CD4-positive, alpha-beta memory T cell (primary cell): ENCODE measurements at regions of chr1 and their contacts with region 1.

Region 1: DNA sequence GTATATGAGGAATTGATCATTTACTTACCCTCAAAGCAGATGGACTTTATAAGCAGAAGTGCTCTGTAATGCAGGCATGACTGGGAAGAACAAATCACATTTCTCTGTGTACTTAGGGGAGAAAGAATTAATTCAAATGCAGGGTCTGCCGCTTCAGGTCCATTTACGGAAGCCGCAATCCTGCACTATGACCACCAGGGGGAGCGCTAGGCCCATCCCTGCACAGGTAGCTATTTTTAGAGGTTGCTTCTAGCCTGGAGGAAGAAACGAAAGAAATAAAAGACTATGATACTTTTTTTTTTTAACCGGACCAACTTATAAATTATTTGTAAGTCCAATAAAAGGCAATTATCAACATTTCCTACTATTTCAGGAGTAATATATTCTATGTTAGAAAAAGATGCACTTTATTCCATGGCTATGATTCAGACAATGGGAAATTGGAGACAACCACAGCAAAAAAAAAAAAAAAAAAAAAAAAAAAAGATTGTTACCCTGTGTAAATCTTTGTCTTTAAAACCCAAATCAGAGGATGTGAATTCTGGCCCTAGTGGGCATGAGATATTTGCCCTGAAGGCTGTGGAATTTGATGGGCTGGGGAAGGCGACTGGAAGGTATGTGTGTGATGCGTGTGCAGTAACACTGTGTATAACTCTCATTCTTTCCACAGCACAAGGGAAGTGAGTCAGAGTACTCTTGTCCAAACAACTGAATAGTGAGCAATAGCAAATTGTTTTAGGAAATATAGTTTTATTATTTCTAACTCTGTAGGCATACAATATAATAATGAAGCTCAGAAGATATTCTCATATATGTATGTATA is 12.9 kb upstream of the FYB2 start:
- DNase-seq: peak; percentile 55 to 60 (median 60)
- H3K4me3 ChIP-seq: no peak overlapping the region
- H3K4me3 Mint-ChIP-seq: peak overlapping the region in 1 of 8 donors; percentile 65
- H3K27ac ChIP-seq: no peak overlapping the region
- H3K27ac Mint-ChIP-seq: no peak overlapping the region
- H3K4me1 ChIP-seq: no peaks in the 10 kb centered on the region
- H3K4me1 Mint-ChIP-seq: peaks cover 0 to 5% (median 1%) of the 10 kb centered on the region in 4 donors
- H3K27me3 ChIP-seq: no peaks in the 10 kb centered on the region
- H3K27me3 Mint-ChIP-seq: peaks cover 7 to 20% of the 10 kb centered on the region in 2 donors

Region 2: DNA sequence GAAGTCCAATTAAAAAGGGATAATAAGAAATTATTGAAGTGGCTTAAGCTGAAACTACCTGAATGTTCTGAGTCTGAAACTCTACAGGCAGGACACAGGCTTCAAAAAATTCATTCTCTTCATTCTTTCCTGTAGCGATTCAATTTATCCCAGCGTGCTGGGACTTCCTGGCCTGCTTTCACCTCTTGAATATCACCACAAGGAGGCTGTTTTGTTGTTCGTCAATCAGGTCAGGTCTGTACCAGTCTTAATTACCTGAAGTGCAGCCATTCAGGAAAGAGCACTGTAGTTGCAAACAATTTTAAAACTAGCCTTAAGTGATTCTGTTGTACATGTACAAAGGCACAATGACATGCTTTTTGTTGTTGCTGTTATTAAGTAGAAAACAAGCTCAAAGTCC is 51.3 kb before region 1 on chr1:
- CTCF ChIA-PET with region 1: no interaction called
- POLR2A ChIA-PET with region 1: no interaction called
- intact Hi-C with region 1: no loop called
- DNase-seq: no peak
- H3K4me3 ChIP-seq: no peak overlapping the region
- H3K4me3 Mint-ChIP-seq: no peak overlapping the region
- H3K27ac ChIP-seq: no peak overlapping the region
- H3K27ac Mint-ChIP-seq: no peak overlapping the region
- H3K4me1 ChIP-seq: no peaks in the 10 kb centered on the region
- H3K4me1 Mint-ChIP-seq: no peaks in the 10 kb centered on the region
- H3K27me3 ChIP-seq: no peaks in the 10 kb centered on the region
- H3K27me3 Mint-ChIP-seq: no peaks in the 10 kb centered on the region

Region 3: DNA sequence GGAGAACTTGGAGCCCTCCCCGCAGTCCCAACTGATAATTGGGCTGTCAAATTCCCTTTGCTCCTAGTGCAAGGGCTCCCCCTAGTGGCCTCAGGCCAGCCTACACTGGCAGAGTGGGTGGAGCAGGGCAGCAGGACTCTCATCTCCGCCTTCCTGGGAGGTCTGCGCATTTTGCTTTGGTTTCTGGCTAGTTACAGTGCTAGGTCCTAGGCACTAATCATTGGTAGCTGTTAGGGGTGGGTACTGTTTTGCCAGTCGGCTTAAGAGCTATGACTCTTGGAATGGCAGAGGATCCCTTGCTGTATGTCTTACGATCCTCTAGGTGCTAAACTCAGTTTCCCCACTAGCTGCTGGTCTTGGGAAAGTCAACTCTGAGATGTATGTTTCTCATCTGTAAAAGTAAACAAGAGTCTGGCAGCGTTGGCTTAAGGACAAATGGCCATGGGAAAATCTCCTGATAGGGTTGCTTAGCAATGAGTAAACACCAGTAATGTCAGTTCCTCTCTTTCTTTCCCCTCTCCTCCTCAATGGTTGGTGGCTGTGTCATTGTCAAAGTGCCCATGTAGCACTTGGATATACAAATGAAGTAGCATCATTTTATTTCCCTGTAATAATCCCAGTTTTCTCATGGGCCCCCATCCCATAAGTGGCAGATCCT is 10.8 kb before region 1 on chr1:
- CTCF ChIA-PET with region 1: interaction called, 17 read pairs
- POLR2A ChIA-PET with region 1: no interaction called
- intact Hi-C with region 1: no loop called
- DNase-seq: peak in 4 of 5 donors; percentile 3 to 29 (median 11)
- H3K4me3 ChIP-seq: no peak overlapping the region
- H3K4me3 Mint-ChIP-seq: no peak overlapping the region
- H3K27ac ChIP-seq: no peak overlapping the region
- H3K27ac Mint-ChIP-seq: no peak overlapping the region
- H3K4me1 ChIP-seq: no peaks in the 10 kb centered on the region
- H3K4me1 Mint-ChIP-seq: no peaks in the 10 kb centered on the region
- H3K27me3 ChIP-seq: no peaks in the 10 kb centered on the region
- H3K27me3 Mint-ChIP-seq: peaks cover 2 to 13% of the 10 kb centered on the region in 2 donors

Region 4: DNA sequence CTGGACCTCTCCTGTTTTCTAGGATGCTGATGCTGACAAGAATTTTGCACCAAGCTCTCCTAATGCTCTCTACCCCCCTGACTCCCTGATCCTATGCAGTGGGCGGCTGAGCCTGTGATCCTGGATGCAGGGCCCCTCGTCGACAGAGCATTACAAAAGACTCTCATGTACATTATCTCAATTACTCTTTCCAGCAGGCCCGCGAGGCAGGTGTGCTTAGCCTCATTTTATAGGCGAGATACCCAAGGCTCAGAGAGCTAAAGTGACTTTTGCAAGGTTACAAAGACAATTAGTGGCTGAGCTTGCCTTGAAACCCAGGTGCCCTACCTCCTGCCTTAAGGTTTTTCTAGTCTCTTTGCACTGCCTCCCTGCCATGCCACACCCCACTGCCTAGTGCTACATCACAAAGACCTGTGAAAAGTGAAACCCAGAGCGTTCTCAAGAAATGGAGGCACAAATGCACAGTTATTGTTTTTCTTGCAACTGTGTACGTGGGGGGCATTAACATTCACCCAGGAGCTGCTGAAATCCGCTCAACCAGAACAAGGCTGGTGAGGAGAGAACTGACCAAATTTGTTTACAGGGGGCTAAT is 12.6 kb after region 1 on chr1:
- CTCF ChIA-PET with region 1: interaction called, 31 read pairs
- POLR2A ChIA-PET with region 1: no interaction called
- intact Hi-C with region 1: no loop called
- DNase-seq: no peak
- H3K4me3 ChIP-seq: no peak overlapping the region
- H3K4me3 Mint-ChIP-seq: no peak overlapping the region
- H3K27ac ChIP-seq: no peak overlapping the region
- H3K27ac Mint-ChIP-seq: no peak overlapping the region
- H3K4me1 ChIP-seq: no peaks in the 10 kb centered on the region
- H3K4me1 Mint-ChIP-seq: no peaks in the 10 kb centered on the region
- H3K27me3 ChIP-seq: no peaks in the 10 kb centered on the region
- H3K27me3 Mint-ChIP-seq: peaks cover 5 to 13% of the 10 kb centered on the region in 2 donors

Region 5: GRCh38 chr1:56863265-56863992 is 31.3 kb after region 1 on chr1:
- CTCF ChIA-PET with region 1: no interaction called
- POLR2A ChIA-PET with region 1: no interaction called
- intact Hi-C with region 1: no loop called
- DNase-seq: no peak
- H3K4me3 ChIP-seq: no peak overlapping the region
- H3K4me3 Mint-ChIP-seq: no peak overlapping the region
- H3K27ac ChIP-seq: no peak overlapping the region
- H3K27ac Mint-ChIP-seq: no peak overlapping the region
- H3K4me1 ChIP-seq: no peaks in the 10 kb centered on the region
- H3K4me1 Mint-ChIP-seq: no peaks in the 10 kb centered on the region
- H3K27me3 ChIP-seq: no peaks in the 10 kb centered on the region
- H3K27me3 Mint-ChIP-seq: peaks cover 0 to 2% of the 10 kb centered on the region in 2 donors

Region 6: GRCh38 chr1:57072401-57073110 is 240.5 kb after region 1 on chr1:
- CTCF ChIA-PET with region 1: no interaction called
- POLR2A ChIA-PET with region 1: no interaction called
- intact Hi-C with region 1: no loop called
- DNase-seq: no peak
- H3K4me3 ChIP-seq: no peak overlapping the region
- H3K4me3 Mint-ChIP-seq: no peak overlapping the region
- H3K27ac ChIP-seq: no peak overlapping the region
- H3K27ac Mint-ChIP-seq: no peak overlapping the region
- H3K4me1 ChIP-seq: no peaks in the 10 kb centered on the region
- H3K4me1 Mint-ChIP-seq: no peaks in the 10 kb centered on the region
- H3K27me3 ChIP-seq: no peaks in the 10 kb centered on the region
- H3K27me3 Mint-ChIP-seq: peaks cover 0 to 2% of the 10 kb centered on the region in 2 donors

Region 7: DNA sequence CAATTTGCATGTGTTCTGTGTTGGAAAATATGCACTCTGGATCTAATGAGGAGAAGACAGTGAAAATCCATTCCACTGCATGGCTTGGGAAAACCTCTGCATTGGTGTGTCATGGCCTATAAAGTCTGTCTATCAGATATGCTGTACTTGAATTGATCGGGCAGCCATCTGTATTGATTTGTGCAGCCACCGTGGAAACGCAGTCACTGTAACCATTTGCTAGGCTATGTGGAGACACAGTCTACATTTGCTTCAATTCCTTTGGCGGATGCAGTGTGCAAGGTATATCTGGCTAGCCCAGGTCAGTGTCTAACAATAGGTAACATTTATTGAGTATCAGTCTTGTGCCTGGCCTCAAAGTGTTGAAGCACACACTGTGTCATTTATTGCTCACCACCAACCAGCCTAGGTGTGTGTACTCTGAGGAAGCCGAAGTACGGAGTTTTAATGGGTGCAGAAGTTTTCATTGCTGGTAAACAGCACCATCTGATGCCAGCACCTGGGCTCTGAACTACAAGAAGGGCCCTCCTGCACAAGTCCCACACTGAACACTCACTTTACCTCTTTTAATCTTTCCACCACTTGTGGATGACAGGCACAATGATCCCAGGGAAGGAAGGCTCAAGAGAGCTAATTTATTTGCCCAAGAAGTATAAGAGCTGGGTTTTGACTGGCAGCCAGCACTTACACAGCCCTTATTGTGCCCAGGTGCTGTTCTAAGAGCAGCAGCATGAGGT is 508.4 kb after region 1 on chr1:
- CTCF ChIA-PET with region 1: interaction called, 3 read pairs
- POLR2A ChIA-PET with region 1: no interaction called
- intact Hi-C with region 1: loop called (anchors 2 kb)
- DNase-seq: peak in 1 of 5 donors; percentile 3
- H3K4me3 ChIP-seq: no peak overlapping the region
- H3K4me3 Mint-ChIP-seq: no peak overlapping the region
- H3K27ac ChIP-seq: no peak overlapping the region
- H3K27ac Mint-ChIP-seq: no peak overlapping the region
- H3K4me1 ChIP-seq: no peaks in the 10 kb centered on the region
- H3K4me1 Mint-ChIP-seq: no peaks in the 10 kb centered on the region
- H3K27me3 ChIP-seq: no peaks in the 10 kb centered on the region
- H3K27me3 Mint-ChIP-seq: peaks cover 0 to 2% of the 10 kb centered on the region in 2 donors

Region 8: DNA sequence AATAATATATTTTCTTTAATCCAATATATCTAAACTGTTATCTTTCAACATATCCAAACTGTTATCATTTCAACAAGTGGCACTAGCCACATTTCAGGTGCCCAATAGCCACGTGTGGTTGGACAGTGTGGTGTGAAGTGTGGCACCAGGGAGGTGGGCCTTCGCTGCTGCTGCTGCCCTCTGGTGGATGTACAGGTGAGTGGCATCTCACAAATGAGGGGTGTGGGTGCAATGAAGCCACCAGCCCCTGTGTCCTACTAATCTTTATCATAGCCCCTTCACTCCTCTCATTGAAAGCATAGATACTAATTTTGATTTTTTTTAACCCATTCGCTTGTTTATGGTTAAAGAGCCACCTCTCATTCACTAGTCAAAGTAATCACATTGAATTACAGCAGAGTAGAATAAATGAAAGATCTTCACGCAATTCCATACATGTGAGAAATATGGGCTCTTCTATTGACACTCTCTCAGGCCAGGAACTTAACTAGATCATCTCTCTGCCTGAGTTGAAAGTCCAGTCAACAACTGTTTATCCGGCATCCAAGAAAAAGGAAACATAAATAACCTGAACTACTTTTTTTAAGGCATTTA is 1215.3 kb after region 1 on chr1:
- CTCF ChIA-PET with region 1: interaction called, 26 read pairs
- POLR2A ChIA-PET with region 1: no interaction called
- intact Hi-C with region 1: no loop called
- DNase-seq: peak in 3 of 5 donors; percentile 5 to 9 (median 8)
- H3K4me3 ChIP-seq: no peak overlapping the region
- H3K4me3 Mint-ChIP-seq: no peak overlapping the region
- H3K27ac ChIP-seq: no peak overlapping the region
- H3K27ac Mint-ChIP-seq: no peak overlapping the region
- H3K4me1 ChIP-seq: no peaks in the 10 kb centered on the region
- H3K4me1 Mint-ChIP-seq: no peaks in the 10 kb centered on the region
- H3K27me3 ChIP-seq: no peaks in the 10 kb centered on the region
- H3K27me3 Mint-ChIP-seq: no peaks in the 10 kb centered on the region